ENCODE measurements at regions of chr16 and their contacts with region 1.

Region 1: GRCh38 chr16:15542261-15542660 is 100.7 kb downstream of the MARF1 start:
- DNase-seq: no peak
- ATAC-seq: no peak
- H3K4me3 ChIP-seq: no peak overlapping the region
- H3K27ac ChIP-seq: no peak overlapping the region
- H3K4me1 ChIP-seq: no peaks in the 10 kb centered on the region
- H3K27me3 ChIP-seq: no peaks in the 10 kb centered on the region
- CTCF ChIP-seq: no peak

Region 2: DNA sequence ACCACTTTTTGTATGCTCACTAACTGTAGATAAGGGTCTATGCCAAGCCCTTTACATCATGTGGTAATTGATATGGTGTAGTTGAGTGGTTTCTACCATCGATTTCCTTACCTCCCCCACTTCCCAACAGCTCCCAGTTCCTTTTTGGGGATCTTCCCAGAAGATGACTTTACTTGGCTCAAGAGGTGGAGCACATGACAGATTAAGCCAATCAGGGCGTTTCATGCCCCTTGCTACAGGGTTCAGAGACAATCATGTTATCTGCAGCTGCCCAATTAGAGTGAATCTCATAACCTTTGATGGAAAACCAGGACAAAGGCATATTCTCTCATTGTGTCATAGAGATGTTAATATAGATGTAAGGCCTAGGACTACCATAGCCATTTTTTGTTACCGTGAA is 124.1 kb before region 1 on chr16:
- CTCF ChIA-PET with region 1: no interaction called
- POLR2A ChIA-PET with region 1: no interaction called
- in situ Hi-C with region 1: no loop called
- intact Hi-C with region 1: no loop called
- DNase-seq: no peak
- ATAC-seq: no peak
- H3K4me3 ChIP-seq: no peak overlapping the region
- H3K27ac ChIP-seq: no peak overlapping the region
- H3K4me1 ChIP-seq: no peaks in the 10 kb centered on the region
- H3K27me3 ChIP-seq: no peaks in the 10 kb centered on the region
- CTCF ChIP-seq: no peak

Region 3: DNA sequence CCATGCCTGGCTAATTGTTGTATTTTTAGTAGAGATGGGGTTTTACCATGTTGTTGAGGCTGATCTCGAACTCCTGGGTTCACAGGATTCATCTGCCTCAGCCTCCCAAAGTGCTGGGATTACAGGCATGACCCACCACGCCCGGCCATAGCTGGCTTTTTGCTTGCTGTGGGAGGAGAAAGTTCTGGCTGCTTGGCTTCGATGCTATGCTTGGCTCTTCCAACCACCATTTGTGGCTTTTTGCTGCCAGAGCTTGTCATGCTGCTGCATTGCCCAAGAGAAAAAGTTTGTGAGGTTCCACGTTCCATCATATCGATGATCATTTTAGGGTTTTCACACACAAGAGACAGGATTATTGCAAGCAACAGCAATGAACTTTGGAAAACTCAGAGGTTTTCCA is 91.6 kb before region 1 on chr16:
- CTCF ChIA-PET with region 1: no interaction called
- POLR2A ChIA-PET with region 1: no interaction called
- in situ Hi-C with region 1: no loop called
- intact Hi-C with region 1: no loop called
- DNase-seq: no peak
- ATAC-seq: no peak
- H3K4me3 ChIP-seq: no peak overlapping the region
- H3K27ac ChIP-seq: no peak overlapping the region
- H3K4me1 ChIP-seq: no peaks in the 10 kb centered on the region
- H3K27me3 ChIP-seq: no peaks in the 10 kb centered on the region
- CTCF ChIP-seq: no peak

Region 4: GRCh38 chr16:15564604-15565339 is 22.5 kb after region 1 on chr16:
- CTCF ChIA-PET with region 1: no interaction called
- POLR2A ChIA-PET with region 1: interaction called, 13 read pairs
- in situ Hi-C with region 1: no loop called
- intact Hi-C with region 1: no loop called
- DNase-seq: no peak
- ATAC-seq: no peak
- H3K4me3 ChIP-seq: no peak overlapping the region
- H3K27ac ChIP-seq: no peak overlapping the region
- H3K4me1 ChIP-seq: peaks cover 5% of the 10 kb centered on the region; the same call in 1 of the 2 replicates
- H3K27me3 ChIP-seq: no peaks in the 10 kb centered on the region
- CTCF ChIP-seq: no peak

Region 5: GRCh38 chr16:15607700-15608396 is 65.6 kb after region 1 on chr16:
- CTCF ChIA-PET with region 1: no interaction called
- POLR2A ChIA-PET with region 1: no interaction called
- in situ Hi-C with region 1: no loop called
- intact Hi-C with region 1: no loop called
- DNase-seq: no peak
- ATAC-seq: no peak
- H3K4me3 ChIP-seq: no peak overlapping the region
- H3K27ac ChIP-seq: peak overlapping the region; percentile 7; the same call in 1 of the 2 replicates
- H3K4me1 ChIP-seq: no peaks in the 10 kb centered on the region
- H3K27me3 ChIP-seq: no peaks in the 10 kb centered on the region
- CTCF ChIP-seq: no peak

Region 6: GRCh38 chr16:15732416-15732815 is 190.2 kb after region 1 on chr16:
- CTCF ChIA-PET with region 1: no interaction called
- POLR2A ChIA-PET with region 1: no interaction called
- in situ Hi-C with region 1: no loop called
- intact Hi-C with region 1: no loop called
- DNase-seq: no peak
- ATAC-seq: no peak
- H3K4me3 ChIP-seq: no peak overlapping the region
- H3K27ac ChIP-seq: no peak overlapping the region
- H3K4me1 ChIP-seq: no peaks in the 10 kb centered on the region
- H3K27me3 ChIP-seq: no peaks in the 10 kb centered on the region
- CTCF ChIP-seq: no peak